PC-9 (cell line): ENCODE measurements at regions of chr10 and their contacts with region 1.

Region 1: GRCh38 chr10:21516242-21517131 is 9.0 kb downstream of the SKIDA1 start:
- DNase-seq: peak in 1 of 2 experiments; percentile 52
- H3K4me3 ChIP-seq: peak overlapping the region; percentile 66; the same call in 1 of the 2 replicates
- H3K27ac ChIP-seq: no peak overlapping the region
- H3K4me1 ChIP-seq: peaks cover 26% of the 10 kb centered on the region
- H3K27me3 ChIP-seq: no peaks in the 10 kb centered on the region
- CTCF ChIP-seq: no peak

Region 2: GRCh38 chr10:21099291-21100062 is 417.0 kb before region 1 on chr10:
- CTCF ChIA-PET with region 1: no interaction called
- POLR2A ChIA-PET with region 1: interaction called, 18 read pairs
- intact Hi-C with region 1: no loop called
- DNase-seq: no peak
- H3K4me3 ChIP-seq: no peak overlapping the region
- H3K27ac ChIP-seq: peak overlapping the region; percentile 19; the same call in 1 of the 2 replicates
- H3K4me1 ChIP-seq: peaks cover 38% of the 10 kb centered on the region
- H3K27me3 ChIP-seq: no peaks in the 10 kb centered on the region
- CTCF ChIP-seq: no peak

Region 3: GRCh38 chr10:21278491-21279239 is 237.8 kb before region 1 on chr10:
- CTCF ChIA-PET with region 1: interaction called, 4 read pairs
- POLR2A ChIA-PET with region 1: no interaction called
- intact Hi-C with region 1: loop called (anchors 2 kb)
- DNase-seq: peak; percentile 71 to 90
- H3K4me3 ChIP-seq: no peak overlapping the region
- H3K27ac ChIP-seq: 0 out of 2 replicates have a peak overlapping the region, but pooled peaks have one; percentile 25
- H3K4me1 ChIP-seq: peaks cover 19% of the 10 kb centered on the region
- H3K27me3 ChIP-seq: no peaks in the 10 kb centered on the region
- CTCF ChIP-seq: peak; percentile 89

Region 4: DNA sequence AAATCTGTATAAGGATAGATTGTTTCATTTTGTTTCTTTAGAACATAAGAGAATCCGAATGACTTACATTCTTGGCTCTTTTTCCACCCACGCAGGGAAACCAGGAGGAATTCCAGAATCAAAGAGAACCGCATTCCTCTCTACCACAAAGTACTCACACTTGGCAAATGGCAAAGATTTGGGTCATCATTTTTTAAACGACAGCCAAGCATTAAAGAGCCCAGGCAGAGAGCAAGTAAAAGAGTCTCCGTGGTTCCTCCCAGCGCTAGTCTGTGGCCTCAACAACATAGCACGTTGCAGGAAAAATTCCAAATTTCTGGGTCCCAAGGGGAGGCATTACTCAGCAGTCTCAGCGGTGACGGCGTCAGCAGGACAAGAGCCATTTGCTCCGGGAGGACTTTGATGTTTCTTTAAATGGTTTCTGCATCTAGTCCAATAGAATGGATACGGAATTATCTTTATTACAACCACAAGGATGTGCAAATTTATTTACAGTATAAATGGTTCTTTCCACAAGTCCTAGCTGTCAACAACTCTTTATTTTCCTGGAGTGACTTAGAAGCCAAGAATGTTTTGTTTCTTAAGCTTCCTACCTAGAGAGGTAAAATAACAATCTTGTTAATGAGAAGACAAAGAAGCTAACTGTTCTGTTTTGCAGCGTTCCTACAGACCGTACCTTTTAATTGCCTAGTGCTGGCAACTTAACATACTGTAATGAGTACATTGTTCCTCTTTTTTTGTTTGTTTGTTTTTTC is 223.5 kb before region 1 on chr10:
- CTCF ChIA-PET with region 1: no interaction called
- POLR2A ChIA-PET with region 1: no interaction called
- intact Hi-C with region 1: loop called (anchors 5 kb)
- DNase-seq: peak; percentile 77 to 87
- H3K4me3 ChIP-seq: peak overlapping the region; percentile 51; the same call in 1 of the 2 replicates
- H3K27ac ChIP-seq: peak overlapping the region; percentile 85
- H3K4me1 ChIP-seq: peaks cover 32% of the 10 kb centered on the region
- H3K27me3 ChIP-seq: no peaks in the 10 kb centered on the region
- CTCF ChIP-seq: no peak

Region 5: DNA sequence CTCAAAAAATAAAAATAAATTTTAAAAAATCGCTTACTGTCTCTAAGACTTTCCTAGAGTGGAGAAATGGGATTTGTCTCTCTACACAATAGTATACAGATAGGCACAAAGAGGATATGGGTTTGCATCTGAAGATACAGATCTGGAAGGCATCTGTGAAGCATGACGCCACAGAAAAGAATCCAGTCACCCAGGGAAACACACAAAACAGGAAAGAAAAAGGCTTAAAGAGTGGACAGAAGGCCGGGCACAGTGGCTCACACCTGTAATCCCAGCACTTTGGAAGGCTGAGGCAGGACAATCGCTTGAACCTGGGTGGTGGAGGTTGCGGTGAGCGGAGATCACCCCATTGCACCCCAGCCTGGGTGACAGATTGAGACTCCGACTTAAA is 52.3 kb before region 1 on chr10:
- CTCF ChIA-PET with region 1: no interaction called
- POLR2A ChIA-PET with region 1: no interaction called
- intact Hi-C with region 1: loop called (anchors 2 kb)
- DNase-seq: peak; percentile 61 to 67
- H3K4me3 ChIP-seq: no peak overlapping the region
- H3K27ac ChIP-seq: no peak overlapping the region
- H3K4me1 ChIP-seq: no peaks in the 10 kb centered on the region
- H3K27me3 ChIP-seq: no peaks in the 10 kb centered on the region
- CTCF ChIP-seq: no peak

Region 6: DNA sequence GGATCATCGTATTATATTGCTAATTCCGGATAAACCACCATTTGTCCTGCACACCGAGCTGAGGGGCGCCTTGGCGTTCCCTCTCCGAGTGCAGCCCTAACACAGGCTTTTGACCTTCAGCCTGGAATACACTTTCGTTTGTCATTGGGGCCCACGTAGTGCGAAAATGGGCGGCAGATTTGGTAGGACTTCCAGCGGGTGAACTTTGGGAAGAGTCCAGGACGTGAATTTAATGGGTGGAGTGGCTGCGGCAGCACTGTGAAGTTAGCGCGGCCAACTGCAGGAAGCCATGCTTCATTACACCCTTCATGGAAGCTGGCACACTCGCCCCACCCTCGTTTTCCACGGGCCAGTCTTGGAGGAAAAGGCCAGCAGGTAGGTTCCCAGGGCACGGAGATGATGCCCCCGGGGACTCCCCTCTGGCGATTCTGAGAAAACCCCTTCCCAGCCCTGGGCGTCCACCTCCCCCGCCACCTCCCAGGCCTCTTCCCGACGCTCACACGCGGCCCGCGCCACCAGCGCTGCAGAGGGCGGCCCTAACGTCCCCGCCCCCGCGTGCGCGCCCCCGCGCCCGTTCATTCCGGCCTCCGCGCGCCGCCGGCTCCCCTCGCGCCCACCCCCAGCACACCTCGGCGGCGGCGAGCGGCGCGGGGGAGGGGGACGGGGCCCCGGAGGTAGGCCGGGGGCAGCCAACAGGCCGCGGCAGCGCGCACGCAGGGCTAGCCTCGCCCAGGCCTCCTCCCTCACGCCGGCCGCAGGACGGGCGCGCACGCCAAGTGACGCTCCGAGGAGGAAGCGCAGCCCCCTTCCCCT is 17.2 kb after region 1 on chr10 and contains the start of gene MLLT10:
- CTCF ChIA-PET with region 1: no interaction called
- POLR2A ChIA-PET with region 1: interaction called, 4 read pairs
- intact Hi-C with region 1: loop called (anchors 1 kb)
- DNase-seq: peak; percentile 67 to 95
- H3K4me3 ChIP-seq: peak within 1 kb of the TSS; percentile 71
- H3K27ac ChIP-seq: peak within 1 kb of the TSS; percentile 72
- H3K4me1 ChIP-seq: peaks cover 16% of the 10 kb centered on the region
- H3K27me3 ChIP-seq: no peaks in the 10 kb centered on the region
- CTCF ChIP-seq: no peak
- total RNA-seq, gene MLLT10: 39.6 and 48.4 TPM in 2 replicates